GM12878 (cell line): ENCODE measurements at regions of chr9 and their contacts with region 1.

Region 1: DNA sequence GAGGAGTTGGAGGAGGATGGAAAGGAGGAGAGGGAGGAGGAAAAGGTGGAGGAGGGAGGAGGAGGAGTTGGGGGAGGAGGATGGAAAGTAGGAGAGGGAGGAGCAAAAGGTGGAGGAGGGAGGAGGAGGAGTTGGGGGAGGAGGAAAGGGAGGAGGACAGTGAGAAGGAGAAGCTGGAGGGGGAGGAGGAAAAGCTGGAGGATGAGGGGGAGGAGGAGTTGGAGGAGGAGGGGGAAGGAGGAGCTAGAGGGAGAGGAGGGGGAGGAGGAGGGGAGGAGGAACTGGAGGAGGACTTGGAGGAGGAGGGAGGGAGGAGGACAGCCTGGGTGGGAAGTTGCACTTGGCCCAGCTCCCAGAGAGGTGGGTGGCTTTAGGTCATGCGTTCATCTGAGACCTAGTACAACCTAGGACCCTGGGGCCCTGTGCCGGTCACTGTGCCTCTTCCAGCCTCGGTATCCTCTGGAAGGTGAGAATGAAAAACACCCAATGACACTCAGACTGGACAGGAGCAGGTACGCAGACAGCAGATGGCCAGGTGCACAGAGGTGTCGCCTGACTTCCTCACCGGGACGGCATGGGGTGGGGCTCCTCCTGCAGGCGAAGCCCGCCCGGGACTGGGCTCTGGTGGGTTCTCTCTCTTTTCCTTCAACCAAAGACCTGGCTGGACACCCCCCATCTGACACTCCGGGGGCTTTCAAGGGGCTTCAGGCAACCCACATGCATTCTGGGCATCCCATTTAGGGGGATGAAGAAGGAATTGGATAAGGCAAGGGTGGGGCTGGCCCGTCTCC is 12.2 kb upstream of the SLC2A6 start:
- DNase-seq: no peak
- ATAC-seq: no peak
- H3K4me3 ChIP-seq: no peak overlapping the region
- H3K27ac ChIP-seq: no peak overlapping the region
- H3K4me1 ChIP-seq: peaks cover 2% of the 10 kb centered on the region
- H3K27me3 ChIP-seq: no peaks in the 10 kb centered on the region; a peak in 3 of 4 replicates
- CTCF ChIP-seq: no peak
- EP300 ChIP-seq: no peak
- POLR2A ChIP-seq: no peak
- RAD21 ChIP-seq: no peak

Region 2: DNA sequence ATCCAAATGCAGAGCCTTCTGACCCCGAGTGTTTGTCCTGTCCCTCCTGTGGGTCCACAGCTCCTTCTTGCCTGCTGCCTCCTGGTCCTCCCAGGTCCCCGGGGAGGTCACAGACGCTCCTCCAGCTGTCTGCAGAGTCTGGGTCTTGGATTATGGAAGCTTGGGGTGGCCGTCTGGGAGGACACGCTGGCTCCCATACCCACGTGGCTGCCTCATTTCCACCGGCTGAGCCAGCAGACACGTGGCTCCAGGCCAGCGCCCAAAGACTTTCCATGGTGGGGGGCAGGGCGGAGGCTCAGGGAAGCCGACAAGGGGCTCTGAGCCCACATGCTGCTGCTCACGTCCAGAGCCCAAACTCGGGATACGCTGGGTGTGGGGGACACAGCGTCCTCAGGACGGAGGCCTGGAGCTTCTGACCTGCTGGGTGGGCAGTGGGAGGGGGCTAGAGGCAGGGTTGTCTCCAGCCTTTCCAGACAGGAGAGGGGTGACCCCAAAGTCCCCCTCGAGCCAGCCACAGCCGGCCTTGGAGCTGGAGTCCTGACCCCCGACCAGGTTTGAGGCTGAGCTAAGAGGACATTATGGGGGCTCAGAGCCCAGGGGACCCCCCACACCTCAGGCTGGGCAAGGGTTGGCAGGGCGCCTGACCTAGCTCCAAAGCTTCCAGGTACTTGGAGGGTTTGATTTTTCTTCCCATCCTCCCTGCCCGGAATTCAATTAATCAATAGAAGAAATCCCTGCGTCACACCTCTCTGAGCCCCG is 697.5 kb after region 1 on chr9:
- CTCF ChIA-PET with region 1: no interaction called
- POLR2A ChIA-PET with region 1: interaction called, 10 read pairs
- RAD21 ChIA-PET with region 1: no interaction called
- SMC1A ChIA-PET with region 1: no interaction called
- in situ Hi-C with region 1: no loop called
- intact Hi-C with region 1: no loop called
- DNase-seq: no peak
- ATAC-seq: no peak
- H3K4me3 ChIP-seq: no peak overlapping the region
- H3K27ac ChIP-seq: no peak overlapping the region
- H3K4me1 ChIP-seq: no peaks in the 10 kb centered on the region
- H3K27me3 ChIP-seq: no peaks in the 10 kb centered on the region
- CTCF ChIP-seq: no peak
- EP300 ChIP-seq: no peak
- POLR2A ChIP-seq: no peak
- RAD21 ChIP-seq: no peak